Activated CD4-positive, alpha-beta T cell treated with anti-CD3 and anti-CD28 coated beads, Interleukin-2, amount 10 ng/mL, durations not matched to agents 7 days and 5 days (primary cell): ENCODE measurements at regions of chr4 and their contacts with region 1.

Region 1: GRCh38 chr4:80202190-80202711 is 4.9 kb downstream of the PRDM8 start:
- DNase-seq: peak; percentile 73
- H3K4me3 Mint-ChIP-seq: peak overlapping the region; percentile 70
- H3K27ac Mint-ChIP-seq: peak overlapping the region; percentile 63
- H3K4me1 Mint-ChIP-seq: peaks cover 26% of the 10 kb centered on the region
- H3K27me3 Mint-ChIP-seq: peaks cover 43% of the 10 kb centered on the region

Region 2: DNA sequence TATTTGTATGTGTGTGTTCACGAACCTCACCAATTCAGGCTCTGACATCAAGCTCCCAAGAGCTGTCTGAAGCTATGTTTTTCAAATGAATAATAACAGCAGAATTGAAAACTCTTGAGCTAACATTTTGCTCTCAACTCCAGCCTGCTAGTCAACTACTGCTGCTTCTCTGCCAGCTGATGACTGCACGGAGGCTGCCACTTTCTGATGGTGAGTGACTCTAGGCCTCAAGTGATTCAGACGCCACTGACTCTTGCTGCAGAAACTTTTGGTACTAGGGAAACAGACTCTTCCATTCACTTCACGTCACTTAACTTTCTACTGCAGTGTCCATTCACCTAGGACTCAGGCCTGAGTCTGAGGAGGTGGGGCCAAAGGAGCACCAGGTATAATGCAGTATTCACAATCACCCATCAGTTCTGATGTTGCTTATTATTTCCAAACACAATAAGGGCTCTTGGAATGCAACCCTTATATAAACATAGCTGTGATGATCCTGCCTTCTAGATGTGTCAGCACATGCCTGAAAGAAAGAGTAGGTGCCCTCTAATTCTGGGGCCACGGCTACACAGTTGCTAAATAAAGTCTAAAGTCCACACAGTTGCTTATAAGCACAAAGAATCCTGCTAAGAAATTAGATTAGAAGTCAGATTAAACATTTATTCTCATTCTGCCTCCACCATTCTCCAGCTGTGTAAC is 11.0 kb after region 1 on chr4:
- CTCF ChIA-PET with region 1: interaction called, 21 read pairs
- POLR2A ChIA-PET with region 1: no interaction called
- DNase-seq: no peak
- H3K4me3 Mint-ChIP-seq: no peak overlapping the region
- H3K27ac Mint-ChIP-seq: no peak overlapping the region
- H3K4me1 Mint-ChIP-seq: peaks cover 1% of the 10 kb centered on the region
- H3K27me3 Mint-ChIP-seq: peaks cover 31% of the 10 kb centered on the region

Region 3: GRCh38 chr4:80678413-80678812 is 476.2 kb after region 1 on chr4:
- CTCF ChIA-PET with region 1: no interaction called
- POLR2A ChIA-PET with region 1: no interaction called
- DNase-seq: no peak
- H3K4me3 Mint-ChIP-seq: no peak overlapping the region
- H3K27ac Mint-ChIP-seq: no peak overlapping the region
- H3K4me1 Mint-ChIP-seq: peaks cover 2% of the 10 kb centered on the region
- H3K27me3 Mint-ChIP-seq: peaks cover 2% of the 10 kb centered on the region